PC-3 (cell line): ENCODE measurements at regions of chr17 and their contacts with region 1.

Region 1: GRCh38 chr17:47840740-47841603 is at the start of gene SCRN2:
- DNase-seq: peak; percentile 97
- ATAC-seq: peak; percentile 85
- H3K4me3 ChIP-seq: peak within 1 kb of the TSS; percentile 80
- H3K27ac ChIP-seq: no peak within 1 kb of the TSS
- H3K4me1 ChIP-seq: peaks cover 29% of the 10 kb centered on the region
- H3K27me3 ChIP-seq: no peaks in the 10 kb centered on the region
- CTCF ChIP-seq: peak; percentile 99
- total RNA-seq, gene SCRN2: 44.0 and 47.9 TPM in 2 replicates

Region 2: DNA sequence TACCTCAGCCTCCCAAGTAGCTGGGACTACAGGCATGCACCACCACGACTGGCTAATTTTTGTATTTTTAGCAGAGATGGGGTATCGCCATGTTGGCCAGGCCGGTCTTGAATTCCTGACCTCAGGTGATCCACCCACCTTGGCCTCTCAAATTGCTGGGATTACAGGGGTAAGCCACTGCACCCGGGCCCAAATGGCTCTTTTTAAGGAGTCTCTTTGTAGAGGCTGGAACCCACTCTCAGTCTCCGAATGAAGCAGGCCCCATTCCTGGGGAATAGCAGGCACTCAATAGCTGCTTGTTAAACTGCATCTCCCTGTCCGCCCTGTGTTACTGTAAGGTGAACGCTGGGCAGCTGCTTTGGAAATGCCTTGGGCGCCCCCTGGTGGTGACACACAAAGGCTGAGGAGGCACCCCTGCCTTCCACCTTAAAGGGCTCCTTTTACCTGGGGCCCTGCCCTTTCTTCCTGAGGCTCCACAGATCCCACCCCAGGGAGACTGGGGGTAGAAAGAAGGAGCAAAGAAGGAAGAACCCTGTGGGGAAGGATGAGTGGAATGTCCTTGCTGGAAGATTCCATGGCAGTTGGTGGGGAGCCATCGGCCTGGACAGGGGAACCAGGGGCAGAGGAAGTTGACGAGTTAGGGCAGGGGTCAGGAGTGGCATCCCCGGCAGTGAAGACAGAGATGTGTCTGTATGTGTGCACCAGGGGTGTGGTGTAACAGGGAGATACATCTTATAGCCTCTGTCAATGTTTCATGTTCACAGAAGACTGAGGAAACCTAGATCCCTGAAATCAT is 49.0 kb after region 1 on chr17:
- CTCF ChIA-PET with region 1: interaction called, 65 read pairs
- POLR2A ChIA-PET with region 1: no interaction called
- intact Hi-C with region 1: loop called (anchors 1 kb)
- DNase-seq: peak; percentile 93
- ATAC-seq: peak; percentile 99
- H3K4me3 ChIP-seq: no peak overlapping the region
- H3K27ac ChIP-seq: no peak overlapping the region
- H3K4me1 ChIP-seq: peaks cover 17% of the 10 kb centered on the region
- H3K27me3 ChIP-seq: no peaks in the 10 kb centered on the region
- CTCF ChIP-seq: peak; percentile 99

Region 3: DNA sequence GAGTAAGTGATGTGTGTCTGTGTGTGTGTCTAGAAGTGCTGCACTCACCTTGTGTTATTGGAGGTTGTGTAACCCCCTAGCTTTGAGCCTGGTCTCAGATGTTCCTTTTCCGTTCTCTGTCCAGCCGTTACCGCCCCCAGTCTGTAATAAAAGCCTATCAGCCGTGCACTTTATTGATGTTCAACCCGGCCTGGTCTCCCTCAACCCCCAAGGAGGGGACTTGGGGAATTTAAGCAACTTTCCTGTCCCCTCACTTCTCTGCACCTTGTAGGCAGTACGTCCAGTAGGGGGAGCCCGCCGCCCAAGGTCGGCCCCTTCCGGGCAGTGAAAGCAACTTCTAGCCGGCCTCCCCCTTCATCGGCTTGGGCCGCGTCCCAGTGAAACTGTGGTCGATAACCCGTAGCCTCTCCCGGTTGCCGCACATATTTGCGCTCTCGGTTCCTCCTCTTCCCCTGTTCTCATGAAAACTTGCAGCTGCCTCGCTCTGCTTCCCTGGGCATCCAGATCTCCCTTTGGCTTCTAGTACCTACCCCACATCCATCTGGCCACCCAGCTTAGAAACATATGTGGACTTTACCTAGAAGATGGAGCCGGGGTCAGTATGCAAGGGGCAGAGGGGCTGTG is 108.3 kb after region 1 on chr17:
- CTCF ChIA-PET with region 1: interaction called, 5 read pairs
- POLR2A ChIA-PET with region 1: no interaction called
- intact Hi-C with region 1: loop called (anchors 2 kb)
- DNase-seq: peak; percentile 94
- ATAC-seq: peak; percentile 69
- H3K4me3 ChIP-seq: peak overlapping the region; percentile 49
- H3K27ac ChIP-seq: peak overlapping the region; percentile 96
- H3K4me1 ChIP-seq: peaks cover 34% of the 10 kb centered on the region
- H3K27me3 ChIP-seq: no peaks in the 10 kb centered on the region
- CTCF ChIP-seq: peak; percentile 99